Breast epithelium (tissue), 4 donors: ENCODE measurements at regions of chr1 and their contacts with region 1.

Region 1: GRCh38 chr1:113759333-113760101 is at the start of gene PHTF1:
- DNase-seq: peak; percentile 26 to 58
- H3K4me3 ChIP-seq: peak within 1 kb of the TSS; percentile 92 to 97 (median 95)
- H3K27ac ChIP-seq: peak within 1 kb of the TSS; percentile 91 to 92
- H3K4me1 ChIP-seq: no peaks in the 10 kb centered on the region
- H3K27me3 ChIP-seq: no peaks in the 10 kb centered on the region
- CTCF ChIP-seq: no peak
- POLR2A ChIP-seq: no peak
- total RNA-seq, gene PHTF1: 13.8 to 18.4 (median 16.4) TPM

Region 2: DNA sequence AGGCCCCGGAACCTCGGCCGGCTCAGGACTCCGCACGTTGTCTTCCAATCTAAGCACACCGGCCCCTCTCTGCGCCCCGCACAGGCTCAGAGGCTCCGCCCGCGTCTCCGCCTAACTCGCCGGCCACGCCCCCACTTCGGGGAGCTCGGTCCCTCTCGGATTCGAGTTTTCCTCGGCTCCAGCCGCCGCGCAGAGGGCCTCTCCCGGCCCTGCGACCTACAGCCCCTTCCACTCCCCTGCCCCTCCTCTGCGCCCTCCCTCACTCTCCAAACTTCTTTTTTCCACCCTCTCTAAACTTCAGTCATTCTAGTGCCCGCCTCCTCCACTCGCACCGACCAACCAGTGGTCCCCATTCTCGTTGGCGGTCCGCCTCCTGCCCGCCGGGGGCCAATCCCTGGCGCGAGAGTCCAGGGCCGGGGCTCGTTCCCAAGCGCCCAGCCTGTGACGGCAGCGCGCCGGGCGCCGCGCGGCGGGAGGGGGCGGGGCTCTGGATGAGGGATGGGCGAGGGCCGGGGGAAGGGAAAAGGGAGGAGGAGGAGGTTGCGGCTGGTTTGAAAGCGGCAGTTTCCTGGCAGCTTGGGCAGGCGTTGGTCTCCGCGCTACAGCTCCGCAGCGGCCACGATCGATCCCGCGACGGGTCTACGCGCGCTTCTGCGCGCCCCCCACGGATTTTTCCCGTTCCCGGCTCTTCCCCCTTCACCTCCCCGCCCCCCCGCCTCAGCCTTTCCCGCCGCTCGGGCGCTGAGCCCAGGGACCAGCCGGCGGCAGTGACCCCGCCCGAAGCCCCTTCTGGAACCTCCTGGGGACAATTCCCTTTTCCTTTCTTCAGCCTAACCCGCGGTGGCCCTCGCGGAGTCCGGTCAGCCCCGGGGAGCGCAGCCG is 369.3 kb before region 1 on chr1 and contains the start of gene MAGI3:
- intact Hi-C with region 1: loop called (anchors 5 kb)
- DNase-seq: peak; percentile 96 to 99
- H3K4me3 ChIP-seq: peak within 1 kb of the TSS; percentile 95
- H3K27ac ChIP-seq: peak within 1 kb of the TSS; percentile 92
- H3K4me1 ChIP-seq: no peaks in the 10 kb centered on the region
- H3K27me3 ChIP-seq: no peaks in the 10 kb centered on the region
- CTCF ChIP-seq: no peak
- POLR2A ChIP-seq: peak; percentile 45
- total RNA-seq, gene MAGI3: 14.9 to 66.9 (median 33.4) TPM

Region 3: GRCh38 chr1:113467991-113468390 is 291.5 kb before region 1 on chr1:
- intact Hi-C with region 1: no loop called
- DNase-seq: no peak
- H3K4me3 ChIP-seq: no peak overlapping the region
- H3K27ac ChIP-seq: no peak overlapping the region
- H3K4me1 ChIP-seq: no peaks in the 10 kb centered on the region
- H3K27me3 ChIP-seq: no peaks in the 10 kb centered on the region
- CTCF ChIP-seq: no peak
- POLR2A ChIP-seq: no peak

Region 4: DNA sequence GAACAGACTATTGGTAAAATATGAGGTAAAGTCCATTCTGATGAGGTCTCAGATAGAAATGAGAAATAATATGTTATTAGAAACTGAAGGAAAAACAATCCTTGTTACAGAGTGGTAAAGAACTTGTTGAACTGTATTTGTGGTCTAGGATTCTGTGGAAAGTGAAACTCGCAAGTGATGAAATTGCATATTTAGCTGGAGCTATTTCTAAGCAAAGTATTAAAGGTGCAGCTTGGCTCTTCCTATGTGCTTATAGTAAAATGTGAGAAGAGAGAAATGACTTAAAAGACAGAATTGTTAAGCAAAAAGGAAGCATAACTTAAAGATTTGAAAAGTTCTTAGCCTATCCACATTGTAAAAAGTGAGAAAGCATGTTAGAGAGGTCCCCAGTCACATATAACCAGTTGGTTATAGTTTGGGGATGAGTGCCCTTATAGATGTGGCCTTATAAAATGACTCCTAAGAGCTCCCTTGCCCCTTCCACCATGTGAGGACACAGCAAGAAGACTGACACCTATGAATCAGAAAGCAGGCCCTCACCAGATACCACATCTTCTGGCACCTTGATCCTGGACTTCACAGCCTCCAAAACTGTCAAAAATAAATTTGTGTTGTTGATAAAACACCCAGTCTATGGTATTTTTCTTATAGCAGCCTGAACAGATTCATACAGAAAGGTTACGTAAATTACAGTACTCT is 25.0 kb before region 1 on chr1:
- intact Hi-C with region 1: no loop called
- DNase-seq: no peak
- H3K4me3 ChIP-seq: no peak overlapping the region
- H3K27ac ChIP-seq: no peak overlapping the region
- H3K4me1 ChIP-seq: no peaks in the 10 kb centered on the region
- H3K27me3 ChIP-seq: no peaks in the 10 kb centered on the region
- CTCF ChIP-seq: no peak
- POLR2A ChIP-seq: no peak

Region 5: DNA sequence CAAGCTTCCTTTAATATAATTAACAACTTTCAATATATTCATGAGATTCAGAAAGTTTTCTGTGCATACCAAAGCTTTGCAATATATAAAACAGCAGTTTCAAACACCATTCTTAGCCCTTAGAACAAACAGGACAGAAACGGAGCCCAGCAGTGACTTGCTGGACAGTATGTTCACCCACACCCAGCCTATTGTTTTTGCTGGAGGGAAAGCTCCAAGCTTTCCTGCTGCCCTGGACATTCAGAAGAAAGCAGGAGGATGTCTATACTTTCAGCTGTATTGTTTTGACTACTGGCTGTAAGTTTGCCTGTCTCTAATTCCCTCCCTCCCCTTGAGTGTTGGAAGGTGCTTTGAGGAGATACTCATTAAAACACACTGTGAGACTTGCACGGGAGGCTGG is 900.7 kb after region 1 on chr1:
- intact Hi-C with region 1: no loop called
- DNase-seq: no peak
- H3K4me3 ChIP-seq: no peak overlapping the region
- H3K27ac ChIP-seq: no peak overlapping the region
- H3K4me1 ChIP-seq: no peaks in the 10 kb centered on the region
- H3K27me3 ChIP-seq: no peaks in the 10 kb centered on the region
- CTCF ChIP-seq: no peak
- POLR2A ChIP-seq: no peak